ENCODE measurements at regions of chr1 and their contacts with region 1.

Region 1: GRCh38 chr1:26111530-26112406 is at the start of gene PDIK1L:
- DNase-seq: peak; percentile 96 to 97
- ATAC-seq: peak; percentile 98
- H3K4me3 ChIP-seq: peak within 1 kb of the TSS; percentile 71 to 93
- H3K27ac ChIP-seq: peak within 1 kb of the TSS; percentile 62 to 76
- H3K4me1 ChIP-seq: no peaks in the 10 kb centered on the region
- H3K27me3 ChIP-seq: no peaks in the 10 kb centered on the region
- total RNA-seq, gene PDIK1L: 6.5 to 7.5 TPM

Region 2: GRCh38 chr1:25895365-25895993 is 216.3 kb before region 1 on chr1:
- intact Hi-C with region 1: loop called in 1 of 2 experiments (anchors 10 kb)
- DNase-seq: peak; percentile 94 to 96
- ATAC-seq: peak; percentile 96
- H3K4me3 ChIP-seq: no peak overlapping the region
- H3K27ac ChIP-seq: no peak overlapping the region
- H3K4me1 ChIP-seq: no peaks in the 10 kb centered on the region
- H3K27me3 ChIP-seq: no peaks in the 10 kb centered on the region

Region 3: GRCh38 chr1:26161415-26162219 is 49.8 kb after region 1 on chr1:
- intact Hi-C with region 1: loop called (anchors 5 kb)
- DNase-seq: peak; percentile 65 to 89
- ATAC-seq: peak; percentile 61
- H3K4me3 ChIP-seq: peak overlapping the region; percentile 46 to 49
- H3K27ac ChIP-seq: no peak overlapping the region
- H3K4me1 ChIP-seq: no peaks in the 10 kb centered on the region
- H3K27me3 ChIP-seq: no peaks in the 10 kb centered on the region

Region 4: DNA sequence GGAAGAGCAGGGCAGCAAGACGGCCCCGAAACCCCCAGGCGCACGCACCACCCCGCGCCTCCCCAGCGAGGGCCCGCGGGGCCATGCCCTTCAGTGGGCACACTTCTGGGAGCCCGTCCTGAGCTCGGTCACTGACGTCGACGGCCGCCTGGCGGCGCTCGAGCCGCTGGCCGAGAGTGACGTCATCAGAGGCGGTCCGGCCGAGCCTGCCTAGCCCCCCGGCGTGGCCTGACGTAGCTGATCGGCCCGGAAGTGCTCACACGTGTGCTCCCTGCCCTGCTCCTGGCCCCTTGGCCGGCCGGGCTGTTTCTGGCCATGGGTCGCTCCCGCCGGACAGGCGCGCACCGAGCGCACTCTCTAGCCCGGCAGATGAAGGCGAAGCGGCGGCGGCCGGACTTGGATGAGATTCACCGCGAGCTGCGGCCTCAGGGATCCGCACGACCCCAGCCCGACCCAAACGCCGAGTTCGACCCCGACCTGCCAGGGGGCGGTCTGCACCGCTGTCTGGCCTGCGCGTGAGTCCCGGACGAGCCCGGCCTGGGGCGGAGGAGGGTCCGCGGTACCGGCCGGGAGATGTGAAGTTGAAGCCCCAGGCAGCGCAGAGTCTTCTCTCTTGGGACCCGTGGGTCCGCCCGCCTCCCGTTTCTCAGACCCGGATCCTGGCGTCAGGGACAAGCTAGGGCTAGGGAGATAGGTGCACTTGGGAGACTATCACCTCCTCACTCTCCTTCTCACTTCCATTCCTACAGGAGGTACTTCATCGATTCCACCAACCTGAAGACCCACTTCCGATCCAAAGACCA is 58.1 kb after region 1 on chr1 and contains the start of gene ZNF593:
- intact Hi-C with region 1: loop called in 1 of 2 experiments (anchors 5 kb)
- DNase-seq: peak; percentile 95 to 98
- ATAC-seq: peak; percentile 96
- H3K4me3 ChIP-seq: peak within 1 kb of the TSS; percentile 44 to 52
- H3K27ac ChIP-seq: no peak within 1 kb of the TSS
- H3K4me1 ChIP-seq: no peaks in the 10 kb centered on the region
- H3K27me3 ChIP-seq: no peaks in the 10 kb centered on the region
- total RNA-seq, gene ZNF593: 13.4 to 18.3 TPM

Region 5: GRCh38 chr1:26321315-26322041 is 209.7 kb after region 1 on chr1:
- intact Hi-C with region 1: loop called in 1 of 2 experiments (anchors 5 kb)
- DNase-seq: peak; percentile 95 to 97
- ATAC-seq: peak; percentile 92
- H3K4me3 ChIP-seq: no peak overlapping the region
- H3K27ac ChIP-seq: no peak overlapping the region
- H3K4me1 ChIP-seq: no peaks in the 10 kb centered on the region
- H3K27me3 ChIP-seq: no peaks in the 10 kb centered on the region